Activated CD4-positive, alpha-beta T cell treated with anti-CD3 and anti-CD28 coated beads for 36 hours (primary cell): ENCODE measurements at regions of chr11 and their contacts with region 1.

Region 1: DNA sequence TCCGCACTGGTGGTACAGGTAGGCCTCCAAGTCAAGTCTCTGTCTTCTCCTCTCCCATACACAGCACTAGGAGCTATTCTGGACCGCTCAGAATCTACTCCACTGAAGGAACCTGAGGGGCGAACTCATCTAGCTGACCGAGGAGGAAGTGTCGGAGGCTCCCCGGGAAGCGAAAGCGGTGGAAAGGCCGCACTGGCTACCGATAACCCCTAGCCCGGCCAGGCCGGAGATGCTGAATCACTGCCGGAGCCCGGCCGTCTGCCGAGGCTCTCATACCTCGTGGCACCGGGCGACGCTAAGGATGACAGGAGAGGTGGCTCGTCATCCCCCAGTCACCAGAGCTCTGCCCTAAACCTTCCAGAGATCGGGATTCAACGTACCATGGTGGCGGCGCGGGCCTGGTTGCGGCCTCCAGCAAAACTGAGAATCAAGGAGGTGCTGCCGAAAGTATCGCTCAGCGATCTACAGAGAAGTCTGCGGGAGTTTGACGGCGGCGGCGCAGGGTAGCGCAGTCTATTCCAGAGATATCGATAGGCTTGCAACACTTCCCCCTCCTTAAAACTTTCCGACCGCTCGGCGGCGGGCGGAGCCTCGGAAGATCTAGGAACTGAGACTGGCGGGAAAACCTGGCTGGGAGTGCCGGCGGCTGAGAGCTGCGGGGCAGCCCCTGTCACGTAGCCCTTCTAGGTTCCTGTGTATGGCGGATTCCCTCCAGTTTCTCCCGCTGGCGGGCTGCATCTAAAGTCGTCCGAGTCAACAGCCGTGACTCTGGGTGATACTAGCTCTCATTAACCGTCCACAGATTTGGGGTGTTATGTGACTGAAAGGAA is at the start of gene PSMA1:
- DNase-seq: peak; percentile 98
- ATAC-seq: peak; percentile 87
- H3K4me3 Mint-ChIP-seq: peak within 1 kb of the TSS; percentile 93
- H3K27ac Mint-ChIP-seq: peak within 1 kb of the TSS; percentile 95
- H3K4me1 Mint-ChIP-seq: peaks cover 25% of the 10 kb centered on the region
- H3K27me3 Mint-ChIP-seq: no peaks in the 10 kb centered on the region
- total RNA-seq, gene PSMA1: 231 to 330 TPM

Region 2: DNA sequence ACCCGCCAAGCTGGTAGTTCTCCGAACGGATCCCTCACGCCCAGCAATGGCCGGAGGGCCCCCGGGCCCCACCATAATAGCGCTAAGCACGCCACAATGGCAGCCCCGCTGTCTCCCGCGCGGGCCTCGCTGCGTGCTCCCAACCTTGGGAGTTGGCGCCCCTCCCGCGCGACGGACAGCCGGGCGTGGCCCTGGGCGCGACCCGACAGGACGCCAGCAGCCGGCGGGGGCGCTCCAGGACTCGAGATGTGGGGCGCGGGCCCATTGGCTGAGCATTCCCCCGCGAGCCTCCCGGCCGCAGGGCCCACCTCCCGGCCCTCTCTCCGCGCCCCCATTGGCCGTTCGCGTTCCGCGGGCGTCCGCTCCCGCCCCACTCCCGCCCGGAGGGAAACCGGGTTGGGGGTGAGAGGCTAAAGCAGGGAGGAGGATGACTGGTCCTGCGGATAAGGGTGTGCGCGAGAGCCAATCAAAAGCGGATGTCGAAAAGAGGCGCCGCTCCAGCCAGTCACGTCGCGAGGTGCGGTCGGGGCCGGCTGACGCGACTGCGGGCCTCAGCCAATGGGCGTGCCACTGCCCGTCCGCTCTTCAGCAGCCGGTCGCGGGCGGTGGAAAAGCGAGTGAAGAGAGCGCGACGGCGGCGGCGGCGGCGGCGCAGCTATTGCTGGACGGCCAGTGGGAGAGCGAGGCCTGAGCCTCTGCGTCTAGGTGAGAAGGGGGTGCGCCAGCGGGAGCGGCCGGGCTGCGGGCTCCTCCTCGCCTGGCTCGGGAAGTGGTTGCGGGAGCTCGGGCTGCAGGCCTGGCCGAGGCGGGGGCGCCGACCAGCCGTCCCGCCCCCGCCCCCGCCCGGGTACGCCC is 851.8 kb before region 1 on chr11 and contains the start of gene FAR1:
- CTCF ChIA-PET with region 1: no interaction called
- POLR2A ChIA-PET with region 1: no interaction called
- intact Hi-C with region 1: loop called in 1 of 2 experiments (anchors 2 kb)
- DNase-seq: peak; percentile 98
- ATAC-seq: peak; percentile 92
- H3K4me3 Mint-ChIP-seq: peak within 1 kb of the TSS; percentile 95
- H3K27ac Mint-ChIP-seq: peak within 1 kb of the TSS; percentile 96
- H3K4me1 Mint-ChIP-seq: peaks cover 48% of the 10 kb centered on the region
- H3K27me3 Mint-ChIP-seq: peaks cover 9% of the 10 kb centered on the region
- total RNA-seq, gene FAR1: 34.8 to 36.4 TPM

Region 3: GRCh38 chr11:13781148-13781547 is 739.0 kb before region 1 on chr11:
- CTCF ChIA-PET with region 1: no interaction called
- POLR2A ChIA-PET with region 1: no interaction called
- intact Hi-C with region 1: no loop called
- DNase-seq: no peak
- ATAC-seq: peak; percentile 19
- H3K4me3 Mint-ChIP-seq: no peak overlapping the region
- H3K27ac Mint-ChIP-seq: no peak overlapping the region
- H3K4me1 Mint-ChIP-seq: no peaks in the 10 kb centered on the region
- H3K27me3 Mint-ChIP-seq: no peaks in the 10 kb centered on the region

Region 4: GRCh38 chr11:14537134-14537599 is 17.0 kb after region 1 on chr11:
- CTCF ChIA-PET with region 1: interaction called, 9 read pairs
- POLR2A ChIA-PET with region 1: no interaction called
- intact Hi-C with region 1: loop called (anchors 2 kb)
- DNase-seq: peak; percentile 59
- ATAC-seq: peak; percentile 90
- H3K4me3 Mint-ChIP-seq: peak overlapping the region; percentile 59
- H3K27ac Mint-ChIP-seq: peak overlapping the region; percentile 87
- H3K4me1 Mint-ChIP-seq: peaks cover 22% of the 10 kb centered on the region
- H3K27me3 Mint-ChIP-seq: no peaks in the 10 kb centered on the region

Region 5: GRCh38 chr11:14578541-14578956 is 58.4 kb after region 1 on chr11:
- CTCF ChIA-PET with region 1: no interaction called
- POLR2A ChIA-PET with region 1: interaction called, 4 read pairs
- intact Hi-C with region 1: loop called in 1 of 2 experiments (anchors 1 kb)
- DNase-seq: peak; percentile 58
- ATAC-seq: peak; percentile 89
- H3K4me3 Mint-ChIP-seq: peak overlapping the region; percentile 0
- H3K27ac Mint-ChIP-seq: peak overlapping the region; percentile 74
- H3K4me1 Mint-ChIP-seq: peaks cover 49% of the 10 kb centered on the region
- H3K27me3 Mint-ChIP-seq: no peaks in the 10 kb centered on the region

Region 6: GRCh38 chr11:14861680-14862079 is 341.5 kb after region 1 on chr11:
- CTCF ChIA-PET with region 1: no interaction called
- POLR2A ChIA-PET with region 1: no interaction called
- intact Hi-C with region 1: no loop called
- DNase-seq: no peak
- ATAC-seq: no peak
- H3K4me3 Mint-ChIP-seq: no peak overlapping the region
- H3K27ac Mint-ChIP-seq: no peak overlapping the region
- H3K4me1 Mint-ChIP-seq: peaks cover 19% of the 10 kb centered on the region
- H3K27me3 Mint-ChIP-seq: no peaks in the 10 kb centered on the region

Region 7: GRCh38 chr11:15053191-15053685 is 533.1 kb after region 1 on chr11:
- CTCF ChIA-PET with region 1: no interaction called
- POLR2A ChIA-PET with region 1: no interaction called
- intact Hi-C with region 1: loop called in 1 of 2 experiments (anchors 1 kb)
- DNase-seq: peak; percentile 68
- ATAC-seq: peak; percentile 87
- H3K4me3 Mint-ChIP-seq: no peak overlapping the region
- H3K27ac Mint-ChIP-seq: peak overlapping the region; percentile 84
- H3K4me1 Mint-ChIP-seq: peaks cover 28% of the 10 kb centered on the region
- H3K27me3 Mint-ChIP-seq: peaks cover 5% of the 10 kb centered on the region